ENCODE measurements at regions of chr19 and their contacts with region 1.

Region 1: GRCh38 chr19:45059278-45059965 is 16.9 kb downstream of the ZNF296 start:
- DNase-seq: peak; percentile 88 to 89
- ATAC-seq: peak; percentile 73 to 90
- H3K4me3 ChIP-seq: no peak overlapping the region
- H3K27ac ChIP-seq: no peak overlapping the region
- H3K4me1 ChIP-seq: 0 out of 3 replicates have a peak, but pooled peaks cover 3% of the 10 kb centered on the region
- CTCF ChIP-seq: peak; percentile 98
- EP300 ChIP-seq: no peak
- POLR2A ChIP-seq: no peak
- RAD21 ChIP-seq: peak; percentile 81 to 88

Region 2: GRCh38 chr19:44960906-44961728 is 98.3 kb before region 1 on chr19:
- CTCF ChIA-PET with region 1: interaction called, 12 read pairs
- POLR2A ChIA-PET with region 1: no interaction called
- DNase-seq: no peak
- ATAC-seq: no peak
- H3K4me3 ChIP-seq: no peak overlapping the region
- H3K27ac ChIP-seq: no peak overlapping the region
- H3K4me1 ChIP-seq: peaks cover 14% of the 10 kb centered on the region
- CTCF ChIP-seq: no peak
- EP300 ChIP-seq: no peak
- POLR2A ChIP-seq: no peak
- RAD21 ChIP-seq: no peak

Region 3: DNA sequence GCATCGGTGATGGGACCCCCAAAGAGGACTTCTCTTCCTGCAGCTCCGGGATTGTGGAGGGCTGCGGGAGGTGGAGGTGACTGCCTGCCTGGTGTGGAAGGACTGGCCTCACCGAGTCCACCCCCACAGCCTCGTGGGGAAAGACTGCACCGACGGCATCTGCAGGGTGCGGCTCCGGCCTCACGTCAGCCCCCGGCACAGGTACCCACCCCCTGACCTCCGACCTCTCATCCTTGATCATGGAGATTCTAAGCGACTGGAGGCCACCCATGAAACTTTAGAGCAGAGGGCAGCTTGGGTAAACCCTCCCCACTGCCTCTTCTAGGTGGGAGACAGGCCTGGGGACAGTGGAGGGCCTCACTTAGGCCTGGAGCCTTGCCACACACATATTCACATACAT is 37.4 kb before region 1 on chr19:
- CTCF ChIA-PET with region 1: interaction called, 14 read pairs
- POLR2A ChIA-PET with region 1: no interaction called
- DNase-seq: no peak
- ATAC-seq: no peak; a peak in 1 of 6 replicates
- H3K4me3 ChIP-seq: no peak overlapping the region
- H3K27ac ChIP-seq: no peak overlapping the region
- H3K4me1 ChIP-seq: no peaks in the 10 kb centered on the region
- CTCF ChIP-seq: no peak
- EP300 ChIP-seq: no peak
- POLR2A ChIP-seq: no peak
- RAD21 ChIP-seq: no peak

Region 4: DNA sequence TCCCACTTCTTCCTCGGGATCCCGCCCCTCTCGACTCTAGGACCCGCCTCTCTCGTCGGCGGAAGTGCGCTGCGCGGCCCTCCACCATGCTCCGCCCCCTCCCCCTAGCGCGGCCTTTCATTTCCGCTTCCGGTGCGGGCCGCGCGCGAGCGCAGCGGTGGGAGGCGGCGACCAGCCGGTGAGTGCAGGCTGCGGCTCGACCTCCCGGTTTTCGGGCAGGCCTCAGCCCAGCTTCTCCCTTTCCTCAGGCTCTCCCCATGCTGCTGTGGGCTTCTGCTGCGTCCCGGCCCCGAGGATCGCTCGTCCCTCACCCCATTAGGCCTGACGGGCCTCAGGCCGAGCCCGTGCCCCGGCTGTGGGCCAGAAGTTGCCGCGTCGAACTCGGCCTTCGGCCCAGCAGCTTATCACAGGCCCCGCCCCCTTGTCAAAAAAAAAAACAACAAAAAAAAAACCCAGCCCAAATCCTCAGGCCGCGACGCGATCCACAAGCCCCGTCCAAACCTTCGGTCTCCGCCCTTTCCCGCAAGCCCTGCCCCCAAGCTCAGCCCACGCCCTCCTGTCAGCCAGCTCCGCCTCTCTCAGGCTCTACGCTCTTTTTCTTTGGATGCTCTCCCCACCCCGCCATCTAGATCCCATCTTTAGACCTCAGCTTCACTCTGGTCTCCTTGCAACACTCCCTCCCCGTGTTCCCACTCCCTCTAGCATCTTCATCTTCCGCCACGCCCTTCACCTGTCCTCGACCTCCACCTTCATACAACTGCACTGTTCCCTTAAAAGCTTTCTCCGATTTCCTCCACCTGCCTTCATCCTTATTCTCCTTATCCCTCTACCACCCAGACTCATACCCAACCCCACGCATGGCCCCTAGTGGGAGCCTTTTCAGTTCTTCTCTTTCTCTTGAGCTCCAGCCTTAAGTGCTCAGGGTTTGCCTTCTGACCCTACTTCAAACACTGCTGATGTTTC is 20.2 kb before region 1 on chr19 and contains the start of gene CLASRP:
- CTCF ChIA-PET with region 1: interaction called, 152 read pairs
- POLR2A ChIA-PET with region 1: interaction called, 9 read pairs
- DNase-seq: peak; percentile 90 to 92
- ATAC-seq: peak; percentile 99
- H3K4me3 ChIP-seq: peak within 1 kb of the TSS; percentile 72
- H3K27ac ChIP-seq: peak within 1 kb of the TSS; percentile 85 to 90
- H3K4me1 ChIP-seq: peaks cover 11% of the 10 kb centered on the region
- CTCF ChIP-seq: no peak
- EP300 ChIP-seq: no peak
- POLR2A ChIP-seq: peak; percentile 92
- RAD21 ChIP-seq: no peak
- polyA plus RNA-seq, gene CLASRP: 30.7 and 39.0 TPM in 2 replicates

Region 5: DNA sequence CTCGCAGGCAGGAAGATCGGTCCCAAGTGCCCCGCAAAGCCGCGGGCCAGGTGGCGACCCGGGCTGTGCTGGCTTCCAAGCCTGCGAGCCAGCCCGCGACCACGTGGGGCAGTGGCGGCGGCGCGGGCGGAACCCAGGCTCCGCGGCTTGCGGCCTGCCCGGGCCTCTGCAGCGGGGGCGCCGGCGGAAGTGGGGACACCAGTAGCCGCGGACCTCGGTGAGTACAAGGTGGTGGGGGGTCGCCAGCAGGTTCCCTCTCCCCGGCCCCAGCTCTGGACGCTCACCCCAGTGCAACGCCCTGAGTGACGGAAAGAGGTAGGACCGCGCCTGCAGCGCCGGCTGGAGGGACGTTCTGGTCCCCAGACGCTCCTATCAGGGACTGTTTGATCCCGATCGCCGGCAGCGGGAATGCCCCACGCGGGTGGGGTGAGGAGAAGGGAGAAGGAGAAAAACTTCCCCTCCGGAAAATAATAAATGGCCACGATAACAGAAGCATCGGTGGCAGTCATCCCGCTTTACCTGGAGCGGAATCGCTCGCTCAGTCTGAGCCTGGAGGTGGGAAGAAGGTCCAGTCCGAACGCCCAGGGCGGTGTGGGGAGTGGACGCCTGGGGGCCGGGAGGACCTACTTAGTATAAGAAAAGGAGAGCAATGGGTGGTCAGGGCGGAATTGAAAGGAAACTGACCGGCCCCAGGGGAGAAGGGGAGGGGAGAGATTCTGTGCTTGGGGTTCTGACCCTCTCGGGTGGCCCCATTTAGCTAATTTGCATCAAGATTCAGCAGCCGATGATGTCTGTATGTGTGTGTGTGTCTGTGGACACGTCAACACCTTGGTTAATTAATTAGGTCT is 19.9 kb after region 1 on chr19 and contains the start of gene GEMIN7:
- CTCF ChIA-PET with region 1: interaction called, 56 read pairs
- POLR2A ChIA-PET with region 1: interaction called, 3 read pairs
- DNase-seq: peak; percentile 83 to 88
- ATAC-seq: peak; percentile 66 to 80
- H3K4me3 ChIP-seq: peak within 1 kb of the TSS; percentile 96
- H3K27ac ChIP-seq: peak within 1 kb of the TSS; percentile 91 to 95
- H3K4me1 ChIP-seq: peaks cover 31% of the 10 kb centered on the region
- CTCF ChIP-seq: no peak; the same call in 2 of the 3 replicates
- EP300 ChIP-seq: peak in 1 of 2 experiments; percentile 24; a peak in 1 of 5 replicates
- POLR2A ChIP-seq: peak; percentile 85
- RAD21 ChIP-seq: peak in 1 of 2 experiments; percentile 32; a peak in 1 of 5 replicates
- polyA plus RNA-seq, gene GEMIN7: 42.2 and 49.2 TPM in 2 replicates

Region 6: GRCh38 chr19:45142726-45143110 is 83.3 kb after region 1 on chr19:
- CTCF ChIA-PET with region 1: no interaction called
- POLR2A ChIA-PET with region 1: no interaction called
- DNase-seq: no peak
- ATAC-seq: no peak
- H3K4me3 ChIP-seq: no peak overlapping the region
- H3K27ac ChIP-seq: no peak overlapping the region
- H3K4me1 ChIP-seq: no peaks in the 10 kb centered on the region
- CTCF ChIP-seq: no peak
- EP300 ChIP-seq: no peak
- POLR2A ChIP-seq: no peak
- RAD21 ChIP-seq: no peak

Measured in A549 (cell line).